Caco-2 (cell line): ENCODE measurements at regions of chr10 and their contacts with region 1.

Region 1: DNA sequence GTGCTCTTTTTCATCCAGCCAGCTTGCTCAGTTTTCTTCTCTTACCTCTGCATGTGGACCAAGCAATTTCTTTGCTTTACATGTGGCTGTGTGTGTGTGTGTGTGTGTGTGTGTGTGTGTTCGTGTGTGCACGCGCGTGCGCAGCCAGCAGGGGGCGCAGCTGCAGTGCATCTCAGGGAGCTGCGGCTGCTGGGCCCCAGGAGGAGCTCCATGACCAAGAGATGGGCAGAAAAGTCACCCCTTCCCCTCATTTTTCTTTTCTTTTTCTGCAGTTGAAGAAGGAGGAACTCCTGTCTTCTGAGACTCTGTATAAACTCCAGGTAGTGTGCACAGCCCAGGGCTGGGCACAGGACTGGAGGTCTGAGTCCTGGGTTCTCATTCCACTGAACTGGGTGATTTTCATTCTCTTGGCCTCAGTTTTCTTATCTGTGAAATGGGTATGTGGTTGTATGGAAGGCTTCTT is 41.8 kb downstream of the BLNK start:
- DNase-seq: peak; percentile 82 to 87
- H3K4me3 ChIP-seq: no peak overlapping the region
- H3K4me3 Mint-ChIP-seq: no peak overlapping the region
- H3K27ac Mint-ChIP-seq: no peak overlapping the region
- H3K4me1 ChIP-seq: peaks cover 3% of the 10 kb centered on the region; the same call in 1 of the 2 replicates
- H3K4me1 Mint-ChIP-seq: no peaks in the 10 kb centered on the region
- H3K27me3 ChIP-seq: no peaks in the 10 kb centered on the region
- H3K27me3 Mint-ChIP-seq: no peaks in the 10 kb centered on the region
- CTCF ChIP-seq: peak; percentile 87 to 97

Region 2: GRCh38 chr10:96176985-96177384 is 52.6 kb before region 1 on chr10:
- CTCF ChIA-PET with region 1: no interaction called
- POLR2A ChIA-PET with region 1: no interaction called
- intact Hi-C with region 1: no loop called
- DNase-seq: no peak
- H3K4me3 ChIP-seq: no peak overlapping the region
- H3K4me3 Mint-ChIP-seq: no peak overlapping the region
- H3K27ac Mint-ChIP-seq: no peak overlapping the region
- H3K4me1 ChIP-seq: no peaks in the 10 kb centered on the region
- H3K4me1 Mint-ChIP-seq: no peaks in the 10 kb centered on the region
- H3K27me3 ChIP-seq: no peaks in the 10 kb centered on the region
- H3K27me3 Mint-ChIP-seq: no peaks in the 10 kb centered on the region
- CTCF ChIP-seq: no peak

Region 3: DNA sequence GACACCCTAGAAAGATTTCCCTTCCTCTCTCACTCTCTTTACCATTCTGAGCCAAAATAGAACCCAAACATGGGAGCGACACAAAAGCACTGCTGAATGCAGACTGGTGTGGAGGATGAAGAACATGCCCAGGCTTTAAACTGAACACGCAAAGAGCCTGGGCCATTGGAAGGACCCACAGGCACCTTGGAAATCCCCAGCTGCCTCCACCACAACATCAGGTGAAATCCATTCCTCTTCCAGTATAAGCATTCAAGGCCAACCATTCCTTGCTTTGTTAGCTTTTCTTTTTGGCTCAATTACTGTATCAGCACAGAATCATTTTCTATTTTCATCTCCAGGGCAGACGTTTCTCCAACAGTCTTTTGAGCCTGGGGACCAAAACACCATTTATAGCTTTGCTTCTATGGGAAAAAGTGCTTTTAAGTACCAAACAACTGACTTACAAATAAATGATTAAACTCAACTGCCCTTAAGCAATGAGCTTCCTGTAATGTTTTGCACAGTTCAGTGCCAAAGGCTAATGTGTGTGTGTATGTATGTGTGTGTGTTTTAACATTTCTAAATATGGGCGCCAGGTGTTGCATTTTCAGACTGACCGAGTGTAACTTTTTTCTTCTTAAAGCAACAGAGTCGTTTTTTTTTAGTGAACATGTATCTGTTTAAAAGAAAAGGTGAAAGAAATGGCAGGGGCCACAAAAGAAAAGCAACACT is 58.0 kb after region 1 on chr10:
- CTCF ChIA-PET with region 1: interaction called, 69 read pairs
- POLR2A ChIA-PET with region 1: no interaction called
- intact Hi-C with region 1: no loop called
- DNase-seq: peak; percentile 58 to 59
- H3K4me3 ChIP-seq: no peak overlapping the region
- H3K4me3 Mint-ChIP-seq: peak overlapping the region; percentile 64
- H3K27ac Mint-ChIP-seq: peak overlapping the region; percentile 76
- H3K4me1 ChIP-seq: peaks cover 31% of the 10 kb centered on the region
- H3K4me1 Mint-ChIP-seq: peaks cover 35% of the 10 kb centered on the region
- H3K27me3 ChIP-seq: no peaks in the 10 kb centered on the region
- H3K27me3 Mint-ChIP-seq: no peaks in the 10 kb centered on the region
- CTCF ChIP-seq: no peak

Region 4: DNA sequence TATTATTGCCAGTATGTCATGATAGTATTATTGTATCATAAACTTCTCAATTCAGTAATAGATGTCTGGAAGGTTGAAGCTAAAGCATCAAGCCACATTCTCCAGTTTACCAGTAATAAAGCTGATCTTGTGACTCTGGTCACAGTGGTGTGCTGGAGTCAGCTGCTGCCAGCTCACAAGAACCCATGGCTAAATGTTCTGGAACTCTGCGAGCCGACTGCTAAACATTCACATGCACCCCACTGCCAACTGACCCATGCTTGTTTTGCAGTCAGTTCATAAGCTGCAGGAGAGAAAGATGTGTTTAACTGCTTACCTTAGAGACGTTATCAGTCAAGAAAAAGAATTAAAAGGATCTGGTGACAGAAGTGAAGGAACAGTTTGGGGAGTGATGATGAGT is 68.8 kb after region 1 on chr10:
- CTCF ChIA-PET with region 1: interaction called, 69 read pairs
- POLR2A ChIA-PET with region 1: no interaction called
- intact Hi-C with region 1: loop called (anchors 1 kb)
- DNase-seq: no peak
- H3K4me3 ChIP-seq: no peak overlapping the region
- H3K4me3 Mint-ChIP-seq: no peak overlapping the region
- H3K27ac Mint-ChIP-seq: no peak overlapping the region
- H3K4me1 ChIP-seq: no peaks in the 10 kb centered on the region
- H3K4me1 Mint-ChIP-seq: no peaks in the 10 kb centered on the region
- H3K27me3 ChIP-seq: no peaks in the 10 kb centered on the region
- H3K27me3 Mint-ChIP-seq: peaks cover 21% of the 10 kb centered on the region
- CTCF ChIP-seq: no peak

Region 5: DNA sequence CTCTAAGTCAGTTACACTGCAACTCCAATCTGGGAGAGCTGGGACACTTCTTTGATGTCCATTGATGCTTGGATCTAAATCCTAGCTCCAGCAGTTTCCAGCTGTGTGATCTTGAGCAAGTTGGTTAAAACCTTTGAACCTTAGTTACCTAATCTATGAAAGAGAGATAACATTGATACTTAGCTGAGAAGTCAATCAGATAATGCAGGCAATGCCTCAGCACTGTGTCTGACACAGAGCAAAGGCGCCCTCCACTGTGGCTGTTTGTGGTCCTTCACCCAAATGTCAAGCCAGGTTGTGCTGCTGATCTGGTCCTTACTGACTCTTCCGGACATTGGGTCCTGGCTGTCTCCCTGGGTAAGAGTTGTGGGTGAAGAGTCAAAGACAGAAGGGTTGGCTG is 94.8 kb after region 1 on chr10:
- CTCF ChIA-PET with region 1: interaction called, 12 read pairs
- POLR2A ChIA-PET with region 1: no interaction called
- intact Hi-C with region 1: no loop called
- DNase-seq: peak in 1 of 2 experiments; percentile 19
- H3K4me3 ChIP-seq: no peak overlapping the region
- H3K4me3 Mint-ChIP-seq: no peak overlapping the region
- H3K27ac Mint-ChIP-seq: no peak overlapping the region
- H3K4me1 ChIP-seq: no peaks in the 10 kb centered on the region
- H3K4me1 Mint-ChIP-seq: peaks cover 8% of the 10 kb centered on the region
- H3K27me3 ChIP-seq: peaks cover 2% of the 10 kb centered on the region
- H3K27me3 Mint-ChIP-seq: peaks cover 16% of the 10 kb centered on the region
- CTCF ChIP-seq: no peak